Activated CD4-positive, alpha-beta memory T cell treated with anti-CD3 and anti-CD28 coated beads for 36 hours (primary cell): ENCODE measurements at regions of chr17 and their contacts with region 1.

Region 1: DNA sequence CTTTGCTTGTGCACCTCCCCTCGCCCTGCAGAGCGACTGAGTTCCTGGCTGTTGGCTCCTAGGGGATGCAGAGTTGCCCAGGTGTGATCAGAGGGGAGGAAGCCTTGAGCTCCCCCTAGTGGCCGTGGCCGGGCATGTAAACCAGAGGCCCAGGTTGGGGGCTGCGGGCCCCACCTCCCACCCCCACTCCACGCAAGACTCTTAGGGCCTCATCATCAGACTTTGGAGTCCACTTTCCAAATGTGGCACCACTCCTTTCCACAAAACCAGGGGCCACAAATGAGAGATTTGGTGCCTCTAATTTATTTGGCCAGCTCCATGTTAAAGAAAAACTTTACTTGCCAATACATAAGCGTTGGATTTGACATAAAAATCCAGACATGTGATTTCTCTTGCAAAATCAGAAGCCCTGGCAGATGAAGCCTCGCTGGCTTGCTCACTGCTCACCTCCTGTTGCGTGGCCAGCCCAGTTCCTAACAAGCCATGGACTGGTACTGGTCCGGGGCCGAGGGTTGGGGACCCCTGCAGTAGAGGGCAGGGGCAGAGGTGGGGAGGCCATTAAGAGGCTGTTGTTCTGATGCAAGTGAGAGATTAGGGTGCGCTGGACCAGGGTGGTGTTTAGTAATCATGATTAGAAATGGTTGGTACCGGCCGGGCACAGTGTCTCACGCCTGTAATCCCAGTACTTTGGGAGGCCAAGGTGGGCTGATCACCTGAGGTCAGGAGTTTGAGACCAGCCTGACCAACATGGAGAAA is 28.7 kb upstream of the GAS7 start:
- DNase-seq: peak; percentile 48
- H3K4me3 Mint-ChIP-seq: no peak overlapping the region
- H3K27ac Mint-ChIP-seq: no peak overlapping the region
- H3K4me1 Mint-ChIP-seq: no peaks in the 10 kb centered on the region
- H3K27me3 Mint-ChIP-seq: no peaks in the 10 kb centered on the region

Region 2: DNA sequence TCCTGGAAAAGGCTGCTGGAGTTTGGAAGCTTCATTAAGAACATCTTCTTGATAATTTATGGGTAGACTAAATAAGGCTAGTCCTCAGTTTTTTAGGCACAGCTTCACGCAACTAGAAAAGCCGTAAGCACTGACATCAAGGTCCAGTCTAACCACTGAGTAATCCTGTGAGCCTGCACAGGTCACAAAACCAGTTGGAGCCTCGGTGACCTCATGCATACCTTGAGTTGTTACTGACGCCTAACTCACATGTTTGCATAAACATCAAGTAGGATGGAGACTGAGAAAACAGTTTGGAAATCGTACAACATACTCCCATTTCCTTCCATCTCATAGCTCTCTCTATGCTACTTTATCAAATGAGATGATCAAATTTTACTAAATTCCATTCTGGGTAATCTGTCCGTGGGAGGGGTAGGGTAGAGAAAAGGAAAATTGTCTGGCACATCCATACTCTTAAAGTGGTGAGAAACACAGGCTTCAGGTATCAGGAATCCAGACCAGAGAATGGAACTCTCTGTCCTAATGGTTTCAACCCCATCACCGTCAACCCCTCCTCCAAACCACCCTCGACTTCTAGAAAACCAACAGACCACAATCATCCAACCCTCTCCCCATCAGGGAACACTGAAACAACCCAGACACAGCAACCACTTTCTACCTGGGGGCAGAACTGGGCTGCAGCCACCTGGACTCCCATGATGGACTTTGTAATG is 258.0 kb before region 1 on chr17:
- CTCF ChIA-PET with region 1: interaction called, 4 read pairs
- POLR2A ChIA-PET with region 1: no interaction called
- intact Hi-C with region 1: loop called (anchors 5 kb)
- DNase-seq: no peak
- H3K4me3 Mint-ChIP-seq: no peak overlapping the region
- H3K27ac Mint-ChIP-seq: no peak overlapping the region
- H3K4me1 Mint-ChIP-seq: no peaks in the 10 kb centered on the region
- H3K27me3 Mint-ChIP-seq: no peaks in the 10 kb centered on the region